ENCODE measurements at regions of chr5 and their contacts with region 1.

Region 1: DNA sequence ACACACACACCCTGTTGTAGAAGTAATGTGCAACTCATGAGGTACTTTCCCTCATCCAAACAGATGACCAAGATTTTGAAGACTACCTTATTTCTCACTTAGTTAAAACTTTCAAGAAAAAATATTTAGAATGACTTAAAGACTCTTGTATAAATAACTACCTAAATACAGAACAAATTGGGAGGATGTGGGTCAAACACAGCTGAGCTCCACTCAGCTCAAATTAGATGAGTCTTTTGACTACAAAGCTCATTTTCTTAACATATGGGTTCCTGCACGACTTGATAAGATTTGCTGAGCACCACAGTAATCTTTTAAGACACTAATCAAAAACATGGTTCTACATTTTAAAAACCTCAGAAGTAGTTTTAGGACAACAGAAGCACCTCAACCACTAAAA is 8.9 kb downstream of the MTX3 start:
- DNase-seq: no peak
- ATAC-seq: no peak
- H3K4me3 ChIP-seq: no peak overlapping the region
- H3K4me3 Mint-ChIP-seq: peak overlapping the region; percentile 21
- H3K27ac ChIP-seq: peak overlapping the region in 1 of 2 donors; percentile 45
- H3K27ac Mint-ChIP-seq: peak overlapping the region; percentile 69
- H3K4me1 ChIP-seq: peaks cover 13 to 22% of the 10 kb centered on the region in 2 donors
- H3K4me1 Mint-ChIP-seq: peaks cover 26% of the 10 kb centered on the region
- H3K27me3 ChIP-seq: no peaks in the 10 kb centered on the region
- H3K27me3 Mint-ChIP-seq: no peaks in the 10 kb centered on the region
- CTCF ChIP-seq: no peak

Region 2: DNA sequence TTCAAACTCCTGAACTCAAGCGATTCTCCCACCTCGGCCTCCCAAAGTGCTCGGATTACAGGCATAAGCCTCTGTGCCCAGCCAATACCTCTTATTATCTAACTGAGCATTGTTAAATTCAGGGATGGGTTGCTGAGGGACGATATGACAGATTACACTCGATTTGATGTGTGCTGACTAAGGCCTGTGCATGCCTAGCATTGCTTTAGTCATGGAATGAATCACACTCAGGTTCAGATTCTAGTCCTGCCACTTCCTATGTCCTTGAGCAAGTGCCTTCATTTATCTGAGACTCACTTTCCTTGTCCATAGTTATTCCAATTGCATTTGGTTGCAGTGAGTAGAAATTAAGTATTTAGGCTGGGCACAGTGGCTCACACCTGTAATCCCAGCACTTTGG is 72.5 kb after region 1 on chr5:
- CTCF ChIA-PET with region 1: no interaction called
- POLR2A ChIA-PET with region 1: interaction called, 11 read pairs
- intact Hi-C with region 1: no loop called
- DNase-seq: no peak
- ATAC-seq: no peak
- H3K4me3 ChIP-seq: no peak overlapping the region
- H3K4me3 Mint-ChIP-seq: no peak overlapping the region
- H3K27ac ChIP-seq: no peak overlapping the region
- H3K27ac Mint-ChIP-seq: no peak overlapping the region
- H3K4me1 ChIP-seq: no peaks in the 10 kb centered on the region
- H3K4me1 Mint-ChIP-seq: no peaks in the 10 kb centered on the region
- H3K27me3 ChIP-seq: peaks cover 0 to 3% (median 0%) of the 10 kb centered on the region in 4 experiments
- H3K27me3 Mint-ChIP-seq: peaks cover 22% of the 10 kb centered on the region
- CTCF ChIP-seq: no peak